Naive thymus-derived CD4-positive, alpha-beta T cell (primary cell): ENCODE measurements at regions of chr2 and their contacts with region 1.

Region 1: DNA sequence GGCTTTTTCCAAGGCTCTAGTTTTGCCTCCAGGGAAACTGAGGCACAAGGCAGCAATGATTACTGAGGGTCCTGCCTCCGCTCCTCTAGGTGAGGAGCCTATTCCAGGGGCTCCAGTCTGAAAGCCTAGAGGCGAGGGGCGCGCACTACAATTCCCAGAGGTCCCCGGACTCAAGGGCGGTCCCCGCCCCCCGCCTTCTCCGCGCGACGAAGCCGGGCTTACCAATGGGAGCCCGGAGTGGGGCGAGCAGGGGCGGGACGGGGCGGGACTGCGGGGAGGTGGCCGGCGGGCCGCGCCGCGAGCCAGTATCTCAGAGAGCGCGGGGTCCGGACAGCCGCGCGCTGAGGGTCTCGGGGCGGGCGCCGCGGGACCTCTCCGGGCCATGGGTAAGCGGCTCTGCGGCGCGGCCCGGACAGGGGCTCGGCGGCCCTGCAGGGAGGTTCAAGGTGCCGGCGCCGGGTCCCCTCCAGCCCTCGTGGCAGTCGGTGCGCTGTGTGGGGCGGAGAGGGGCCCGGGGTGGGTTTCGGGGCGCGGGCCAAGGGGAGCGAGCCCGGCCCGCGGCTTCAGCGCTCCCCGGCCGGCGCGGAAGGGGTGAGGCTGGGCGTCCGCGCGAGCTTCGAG is at the start of gene ARID5A:
- DNase-seq: peak; percentile 82 to 93 (median 88)
- ATAC-seq: peak; percentile 70
- H3K4me3 ChIP-seq: peak within 1 kb of the TSS; percentile 84
- H3K4me3 Mint-ChIP-seq: peak within 1 kb of the TSS; percentile 91 to 98 (median 96)
- H3K27ac ChIP-seq: peak within 1 kb of the TSS; percentile 99
- H3K27ac Mint-ChIP-seq: peak within 1 kb of the TSS; percentile 97 to 100 (median 99)
- H3K4me1 ChIP-seq: peaks cover 39 to 41% of the 10 kb centered on the region in 2 donors
- H3K4me1 Mint-ChIP-seq: peaks cover 37 to 74% (median 50%) of the 10 kb centered on the region in 7 donors
- H3K27me3 ChIP-seq: no peaks in the 10 kb centered on the region
- H3K27me3 Mint-ChIP-seq: no peaks in the 10 kb centered on the region
- total RNA-seq, gene ARID5A: 82.4 to 182 (median 113) TPM

Region 2: GRCh38 chr2:95022309-95023221 is 1514.0 kb before region 1 on chr2:
- CTCF ChIA-PET with region 1: no interaction called
- POLR2A ChIA-PET with region 1: no interaction called
- intact Hi-C with region 1: loop called in 1 of 2 experiments (anchors 10 kb)
- DNase-seq: peak; percentile 69 to 90 (median 83)
- ATAC-seq: peak; percentile 78
- H3K4me3 ChIP-seq: peak overlapping the region; percentile 39
- H3K4me3 Mint-ChIP-seq: peak overlapping the region; percentile 77 to 100 (median 86)
- H3K27ac ChIP-seq: peak overlapping the region; percentile 49
- H3K27ac Mint-ChIP-seq: peak overlapping the region; percentile 81 to 100 (median 95)
- H3K4me1 ChIP-seq: peaks cover 9 to 26% of the 10 kb centered on the region in 2 donors
- H3K4me1 Mint-ChIP-seq: peaks cover 23 to 66% (median 60%) of the 10 kb centered on the region in 7 donors
- H3K27me3 ChIP-seq: no peaks in the 10 kb centered on the region
- H3K27me3 Mint-ChIP-seq: peaks cover 0 to 14% (median 0%) of the 10 kb centered on the region in 5 donors

Region 3: GRCh38 chr2:96265840-96266679 is 270.5 kb before region 1 on chr2 and contains the starts of genes CIAO1 and TMEM127:
- CTCF ChIA-PET with region 1: interaction called, 3 read pairs
- POLR2A ChIA-PET with region 1: interaction called, 5 read pairs
- intact Hi-C with region 1: loop called (anchors 1 to 5 kb)
- DNase-seq: peak; percentile 96 to 99 (median 97)
- ATAC-seq: peak; percentile 97
- H3K4me3 ChIP-seq: peak within 1 kb of the TSS; percentile 86
- H3K4me3 Mint-ChIP-seq: peak within 1 kb of the TSS; percentile 86 to 100 (median 96)
- H3K27ac ChIP-seq: peak within 1 kb of the TSS; percentile 96
- H3K27ac Mint-ChIP-seq: peak within 1 kb of the TSS; percentile 87 to 97 (median 96)
- H3K4me1 ChIP-seq: peaks cover 31 to 37% of the 10 kb centered on the region in 2 donors
- H3K4me1 Mint-ChIP-seq: peaks cover 38 to 61% (median 46%) of the 10 kb centered on the region in 7 donors
- H3K27me3 ChIP-seq: no peaks in the 10 kb centered on the region
- H3K27me3 Mint-ChIP-seq: no peaks in the 10 kb centered on the region
- total RNA-seq, gene CIAO1: 62.1 to 85.3 (median 71.6) TPM
- total RNA-seq, gene TMEM127: 33.7 to 69.0 (median 40.4) TPM

Region 4: GRCh38 chr2:96276787-96277499 is 259.6 kb before region 1 on chr2:
- CTCF ChIA-PET with region 1: no interaction called
- POLR2A ChIA-PET with region 1: no interaction called
- intact Hi-C with region 1: no loop called
- DNase-seq: no peak
- ATAC-seq: no peak
- H3K4me3 ChIP-seq: no peak overlapping the region
- H3K4me3 Mint-ChIP-seq: no peak overlapping the region
- H3K27ac ChIP-seq: no peak overlapping the region
- H3K27ac Mint-ChIP-seq: peak overlapping the region in 3 of 9 donors; percentile 21 to 62 (median 34)
- H3K4me1 ChIP-seq: no peaks in the 10 kb centered on the region
- H3K4me1 Mint-ChIP-seq: no peaks in the 10 kb centered on the region
- H3K27me3 ChIP-seq: no peaks in the 10 kb centered on the region
- H3K27me3 Mint-ChIP-seq: no peaks in the 10 kb centered on the region

Region 5: DNA sequence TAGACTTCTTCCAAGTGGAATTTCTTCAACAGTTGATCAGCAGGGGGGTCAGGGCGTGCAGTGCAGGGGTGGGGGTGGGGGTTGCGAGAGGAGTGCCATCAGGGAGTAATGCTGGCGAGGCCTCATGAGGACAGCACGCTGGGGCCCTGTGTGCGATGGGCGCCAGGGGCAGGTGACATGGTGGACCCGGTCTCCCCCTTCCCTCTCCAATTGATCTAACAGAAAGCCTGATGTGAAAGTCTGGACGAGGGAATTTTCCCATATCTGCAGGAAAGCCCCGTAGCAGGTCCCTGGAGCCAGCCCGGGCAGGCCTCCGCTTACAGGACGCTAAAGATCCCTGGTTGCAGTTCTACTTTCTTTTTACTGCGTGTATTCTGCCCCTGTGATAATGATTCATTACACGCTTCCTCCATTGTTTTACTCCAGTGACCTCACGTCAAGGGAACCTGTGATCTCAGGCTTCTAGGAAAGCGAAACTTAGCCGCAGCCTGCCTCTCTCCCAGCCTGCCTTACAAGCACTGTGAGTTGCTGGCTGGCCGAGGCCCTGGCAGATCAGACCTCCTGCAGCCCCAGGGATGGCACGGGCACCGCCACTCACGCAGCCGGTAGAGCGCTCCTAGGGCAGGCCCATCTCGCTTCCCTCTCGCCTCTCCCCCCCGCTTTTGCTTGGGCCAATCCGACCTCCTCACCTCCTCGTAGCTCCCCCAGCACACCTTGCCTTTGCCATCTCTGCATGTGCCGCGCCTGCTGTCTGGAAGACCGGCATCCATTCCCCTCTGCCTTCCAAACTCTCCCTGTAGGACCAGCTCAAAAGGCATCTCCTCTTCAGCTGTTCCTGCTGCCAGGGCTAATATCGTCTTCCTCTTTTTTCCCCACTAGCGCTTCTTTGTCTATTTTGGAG is 50.6 kb before region 1 on chr2:
- CTCF ChIA-PET with region 1: no interaction called
- POLR2A ChIA-PET with region 1: interaction called, 6 read pairs
- intact Hi-C with region 1: loop called in 1 of 2 experiments (anchors 1 kb)
- DNase-seq: peak; percentile 46 to 83 (median 72)
- ATAC-seq: peak; percentile 93
- H3K4me3 ChIP-seq: peak overlapping the region; percentile 71
- H3K4me3 Mint-ChIP-seq: peak overlapping the region; percentile 87 to 97 (median 94)
- H3K27ac ChIP-seq: peak overlapping the region; percentile 84
- H3K27ac Mint-ChIP-seq: peak overlapping the region; percentile 94 to 100 (median 98)
- H3K4me1 ChIP-seq: peaks cover 6 to 14% of the 10 kb centered on the region in 2 donors
- H3K4me1 Mint-ChIP-seq: peaks cover 11 to 62% (median 29%) of the 10 kb centered on the region in 7 donors
- H3K27me3 ChIP-seq: no peaks in the 10 kb centered on the region
- H3K27me3 Mint-ChIP-seq: peaks cover 0 to 4% (median 2%) of the 10 kb centered on the region in 5 donors

Region 6: GRCh38 chr2:96554293-96555145 is 18.0 kb after region 1 on chr2:
- CTCF ChIA-PET with region 1: interaction called, 26 read pairs
- POLR2A ChIA-PET with region 1: interaction called, 241 read pairs
- intact Hi-C with region 1: loop called (anchors 1 kb)
- DNase-seq: peak; percentile 46 to 80 (median 73)
- ATAC-seq: peak; percentile 76
- H3K4me3 ChIP-seq: no peak overlapping the region
- H3K4me3 Mint-ChIP-seq: peak overlapping the region in 7 of 10 donors; percentile 3 to 67 (median 32)
- H3K27ac ChIP-seq: no peak overlapping the region
- H3K27ac Mint-ChIP-seq: peak overlapping the region; percentile 33 to 88 (median 71)
- H3K4me1 ChIP-seq: peaks cover 4 to 7% of the 10 kb centered on the region in 2 donors
- H3K4me1 Mint-ChIP-seq: peaks cover 0 to 30% (median 15%) of the 10 kb centered on the region in 7 donors
- H3K27me3 ChIP-seq: no peaks in the 10 kb centered on the region
- H3K27me3 Mint-ChIP-seq: peaks cover 0 to 2% (median 0%) of the 10 kb centered on the region in 5 donors

Region 7: DNA sequence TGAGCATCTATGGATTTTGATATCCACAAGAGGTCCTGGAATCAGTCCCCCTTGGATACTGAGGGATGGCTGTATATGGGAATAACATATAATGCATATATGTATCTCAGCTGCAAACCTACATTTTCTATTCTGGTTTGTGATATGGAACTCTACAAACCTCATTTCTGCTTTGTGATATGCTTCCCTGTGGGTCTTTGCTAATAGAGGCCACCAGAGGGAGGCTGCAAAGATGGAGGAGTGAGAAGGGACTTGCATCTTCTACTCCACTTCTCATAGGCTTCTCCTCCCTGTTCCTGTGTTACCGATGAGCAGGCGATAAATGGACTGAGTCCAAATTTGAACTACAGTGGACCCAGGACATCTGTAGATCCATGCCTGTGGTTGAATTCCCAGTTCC is 37.8 kb after region 1 on chr2:
- CTCF ChIA-PET with region 1: no interaction called
- POLR2A ChIA-PET with region 1: no interaction called
- intact Hi-C with region 1: no loop called
- DNase-seq: no peak
- ATAC-seq: no peak
- H3K4me3 ChIP-seq: no peak overlapping the region
- H3K4me3 Mint-ChIP-seq: no peak overlapping the region
- H3K27ac ChIP-seq: no peak overlapping the region
- H3K27ac Mint-ChIP-seq: no peak overlapping the region
- H3K4me1 ChIP-seq: no peaks in the 10 kb centered on the region
- H3K4me1 Mint-ChIP-seq: peaks cover 0 to 3% (median 0%) of the 10 kb centered on the region in 7 donors
- H3K27me3 ChIP-seq: no peaks in the 10 kb centered on the region
- H3K27me3 Mint-ChIP-seq: peaks cover 0 to 10% (median 0%) of the 10 kb centered on the region in 5 donors

Region 8: DNA sequence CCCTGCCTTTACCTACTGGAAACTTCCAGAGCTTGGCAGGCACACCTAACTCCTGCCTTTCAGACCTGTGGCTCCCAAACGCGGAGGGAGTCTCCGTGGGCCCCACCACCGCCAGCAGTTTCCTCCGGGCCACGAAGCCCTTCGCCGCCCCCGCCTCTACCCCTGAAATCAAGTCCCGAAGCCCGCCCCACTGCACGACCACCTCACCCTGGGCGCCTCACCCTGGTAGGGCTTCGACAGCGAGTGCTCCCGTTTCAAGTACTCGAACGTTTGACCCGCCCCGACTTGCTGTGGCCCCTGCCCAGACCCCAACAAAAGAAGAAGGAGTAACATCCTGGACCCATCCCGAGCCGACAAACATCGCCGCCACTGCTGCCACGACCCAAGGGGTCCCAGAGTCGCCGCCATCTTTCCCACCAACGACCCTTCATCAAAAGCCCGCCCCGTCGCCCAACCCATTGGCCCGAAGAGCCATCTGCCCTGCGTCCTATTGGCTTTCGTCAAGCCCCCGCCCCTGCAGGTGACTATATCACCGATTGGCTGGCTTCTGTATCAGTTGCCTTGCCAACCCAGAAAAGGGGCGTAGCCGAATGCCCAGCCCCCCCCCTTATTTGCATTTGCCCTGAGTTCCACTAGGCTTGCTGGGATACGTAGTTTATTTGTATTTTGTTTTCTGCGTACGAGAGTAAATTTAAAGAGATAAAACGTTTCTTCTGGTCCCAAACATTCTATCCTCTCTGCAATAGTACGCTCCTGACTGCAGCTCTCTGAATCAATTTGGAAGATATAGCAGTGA is 203.3 kb after region 1 on chr2 and contains the start of gene LMAN2L:
- CTCF ChIA-PET with region 1: no interaction called
- POLR2A ChIA-PET with region 1: interaction called, 4 read pairs
- intact Hi-C with region 1: loop called (anchors 1 kb)
- DNase-seq: peak; percentile 78 to 99 (median 94)
- ATAC-seq: peak; percentile 100
- H3K4me3 ChIP-seq: peak within 1 kb of the TSS; percentile 70
- H3K4me3 Mint-ChIP-seq: peak within 1 kb of the TSS; percentile 92 to 100 (median 97)
- H3K27ac ChIP-seq: peak within 1 kb of the TSS; percentile 75
- H3K27ac Mint-ChIP-seq: peak within 1 kb of the TSS; percentile 83 to 96 (median 90)
- H3K4me1 ChIP-seq: peaks cover 6% of the 10 kb centered on the region in 2 donors
- H3K4me1 Mint-ChIP-seq: peaks cover 20 to 48% (median 37%) of the 10 kb centered on the region in 7 donors
- H3K27me3 ChIP-seq: no peaks in the 10 kb centered on the region
- H3K27me3 Mint-ChIP-seq: no peaks in the 10 kb centered on the region
- total RNA-seq, gene LMAN2L: 5.0 to 10.9 (median 9.2) TPM

Region 9: GRCh38 chr2:96960153-96960961 is 423.8 kb after region 1 on chr2:
- CTCF ChIA-PET with region 1: no interaction called
- POLR2A ChIA-PET with region 1: interaction called, 3 read pairs
- intact Hi-C with region 1: loop called in 1 of 2 experiments (anchors 1 kb)
- DNase-seq: peak; percentile 58 to 87 (median 75)
- ATAC-seq: peak; percentile 50
- H3K4me3 ChIP-seq: no peak overlapping the region
- H3K4me3 Mint-ChIP-seq: peak overlapping the region; percentile 37 to 83 (median 64)
- H3K27ac ChIP-seq: no peak overlapping the region
- H3K27ac Mint-ChIP-seq: peak overlapping the region; percentile 55 to 99 (median 92)
- H3K4me1 ChIP-seq: peaks cover 42 to 47% of the 10 kb centered on the region in 2 donors
- H3K4me1 Mint-ChIP-seq: peaks cover 36 to 57% (median 53%) of the 10 kb centered on the region in 7 donors
- H3K27me3 ChIP-seq: no peaks in the 10 kb centered on the region
- H3K27me3 Mint-ChIP-seq: peaks cover 0 to 2% (median 0%) of the 10 kb centered on the region in 5 donors